Heart right ventricle (tissue), 16 donors: ENCODE measurements at regions of chr11 and their contacts with region 1.

Region 1: DNA sequence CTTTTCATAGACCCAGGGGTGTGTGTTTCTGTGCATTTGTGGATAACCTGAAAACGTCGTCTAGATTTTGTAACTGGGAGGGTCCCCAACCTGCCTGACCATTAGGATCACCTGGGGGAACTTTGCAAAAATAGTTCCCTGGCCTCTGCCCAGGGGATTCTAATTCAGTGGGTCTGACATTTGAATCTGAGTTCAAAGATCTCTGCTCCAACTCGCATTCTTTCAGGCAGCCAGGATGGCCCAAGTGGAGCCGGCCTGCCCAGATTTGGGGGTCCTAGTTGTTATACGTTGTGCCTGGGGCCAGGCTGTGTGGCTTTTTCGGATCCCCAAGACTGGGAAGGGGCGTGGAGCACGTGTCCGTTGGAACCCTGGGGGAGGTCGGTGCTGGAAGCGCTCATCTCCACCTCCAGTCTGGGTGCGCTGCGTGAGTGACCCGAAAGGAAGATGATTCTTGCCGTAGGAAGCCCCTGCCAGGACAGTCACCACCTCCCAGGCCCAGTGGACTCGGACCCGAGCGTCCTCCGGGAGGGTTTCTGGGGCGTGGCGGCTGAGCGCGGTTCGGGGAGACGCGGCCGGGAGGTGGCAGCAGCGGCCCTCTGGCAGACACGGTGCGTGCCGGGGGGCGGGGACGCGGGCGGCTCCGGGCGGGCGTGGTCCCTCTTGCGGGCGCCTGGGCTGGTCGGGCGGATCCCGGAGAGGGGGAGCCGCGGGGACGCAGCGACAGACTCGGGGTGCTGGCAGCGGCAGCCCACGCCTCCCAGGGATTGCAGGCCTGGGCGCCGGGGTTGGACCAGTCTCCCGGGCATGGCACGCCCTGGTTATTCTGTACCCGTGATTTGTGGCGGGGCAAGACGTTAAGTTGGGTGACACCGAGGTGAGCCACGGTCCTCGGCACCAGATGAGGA is 29.2 kb upstream of the PLET1 start:
- DNase-seq: peak; percentile 78 to 88
- ATAC-seq: peak; percentile 84 to 96 (median 91)
- H3K4me3 ChIP-seq: peak overlapping the region; percentile 36 to 73 (median 62)
- H3K27ac ChIP-seq: peak overlapping the region in 9 of 10 donors; percentile 42 to 88 (median 78)
- H3K4me1 ChIP-seq: peaks cover 0 to 44% (median 19%) of the 10 kb centered on the region in 9 donors
- H3K27me3 ChIP-seq: no peaks in the 10 kb centered on the region
- CTCF ChIP-seq: peak; percentile 66 to 95 (median 90)

Region 2: GRCh38 chr11:112334381-112334780 is 44.5 kb after region 1 on chr11:
- intact Hi-C with region 1: no loop called
- DNase-seq: no peak
- ATAC-seq: no peak
- H3K4me3 ChIP-seq: no peak overlapping the region
- H3K27ac ChIP-seq: no peak overlapping the region
- H3K4me1 ChIP-seq: no peaks in the 10 kb centered on the region
- H3K27me3 ChIP-seq: no peaks in the 10 kb centered on the region
- CTCF ChIP-seq: no peak

Region 3: DNA sequence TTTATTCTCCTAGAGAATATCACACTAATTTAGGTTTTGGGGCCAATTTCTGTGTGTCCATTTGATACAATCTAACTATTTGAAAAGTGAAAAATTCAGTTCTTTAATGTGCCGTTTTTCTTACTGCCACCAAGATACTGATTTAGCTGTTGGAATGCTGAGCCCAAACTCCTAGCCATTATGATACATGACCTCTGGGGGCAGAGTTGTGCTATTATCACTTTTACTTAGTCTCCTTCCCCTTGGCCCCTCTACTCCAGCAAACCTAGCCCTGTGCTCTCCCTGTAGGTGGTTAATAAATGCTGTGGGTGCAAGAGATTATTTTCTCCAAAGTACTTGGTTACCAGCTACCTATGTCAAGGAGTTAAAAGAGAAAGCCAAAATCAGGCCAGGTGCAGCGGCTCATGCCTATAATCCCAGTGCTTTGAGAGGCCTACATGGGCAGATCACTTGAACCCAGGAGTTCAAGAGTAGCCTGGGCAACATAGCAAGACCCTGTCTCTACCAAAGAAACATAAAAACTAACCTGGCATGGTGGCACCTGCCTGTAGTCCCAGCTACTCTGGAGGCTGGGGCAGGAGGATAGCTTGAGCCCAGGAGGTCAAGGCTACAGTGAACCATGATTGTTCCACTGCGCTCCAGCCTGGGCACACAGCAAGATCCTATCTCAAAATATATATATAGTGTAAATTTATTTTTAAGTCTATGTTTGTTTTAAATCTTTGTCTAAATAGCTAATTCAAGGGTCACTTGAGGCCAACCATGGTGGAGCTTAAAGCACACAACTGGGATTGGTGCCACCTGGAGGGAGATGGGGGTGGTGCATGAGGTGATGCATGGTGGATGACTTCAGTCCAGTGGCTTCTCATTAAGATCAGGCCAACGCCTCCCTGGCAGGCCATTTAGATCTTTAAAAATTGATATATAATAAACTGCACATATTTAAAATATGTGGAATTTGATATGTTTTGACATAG is 164.0 kb after region 1 on chr11:
- intact Hi-C with region 1: loop called in 3 of 10 experiments (anchors 2 to 10 kb)
- DNase-seq: peak; percentile 18 to 26
- ATAC-seq: no peak
- H3K4me3 ChIP-seq: no peak overlapping the region
- H3K27ac ChIP-seq: no peak overlapping the region
- H3K4me1 ChIP-seq: no peaks in the 10 kb centered on the region
- H3K27me3 ChIP-seq: no peaks in the 10 kb centered on the region
- CTCF ChIP-seq: peak in 7 of 9 donors; percentile 35 to 51 (median 48)

Region 4: DNA sequence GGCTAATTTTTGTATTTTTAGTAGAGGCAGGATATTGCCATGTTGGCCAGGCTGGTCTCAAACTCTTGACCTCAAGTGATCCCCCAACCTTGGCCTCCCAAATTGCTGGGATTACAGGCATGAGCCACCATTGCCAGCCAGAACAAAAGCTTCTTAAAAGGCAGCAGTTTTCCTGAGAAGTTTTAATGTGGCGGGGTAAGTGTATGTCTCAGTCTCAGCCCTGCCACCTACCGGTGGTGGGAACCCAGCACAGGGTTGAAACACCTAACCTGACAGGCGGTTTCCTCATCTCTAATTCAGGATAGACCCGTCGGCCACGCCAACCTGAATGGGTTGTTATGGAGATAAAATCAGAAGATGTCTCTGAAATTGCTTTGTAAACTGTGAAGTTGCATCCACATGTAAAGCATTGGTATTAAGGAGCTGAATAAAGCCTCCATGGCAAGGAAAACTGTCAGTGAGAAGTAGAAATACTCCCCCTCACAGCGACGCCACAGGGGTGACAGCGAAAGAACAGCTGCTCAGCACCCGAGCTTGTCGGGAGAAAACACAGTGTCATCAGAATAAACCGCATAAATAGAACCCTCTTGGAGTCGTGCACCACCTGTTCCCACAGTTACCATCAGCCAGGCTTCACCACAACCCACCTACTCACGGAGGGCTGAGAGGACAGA is 505.4 kb after region 1 on chr11:
- intact Hi-C with region 1: loop called in 1 of 10 experiments (anchors 5 kb)
- DNase-seq: no peak
- ATAC-seq: peak in 5 of 8 donors; percentile 8 to 72 (median 41)
- H3K4me3 ChIP-seq: no peak overlapping the region
- H3K27ac ChIP-seq: peak overlapping the region in 2 of 10 donors; percentile 62
- H3K4me1 ChIP-seq: peaks cover 0 to 41% (median 12%) of the 10 kb centered on the region in 9 donors
- H3K27me3 ChIP-seq: no peaks in the 10 kb centered on the region
- CTCF ChIP-seq: peak; percentile 11 to 61 (median 51)